Common myeloid progenitor, CD34-positive (primary cell): ENCODE measurements at regions of chr7 and their contacts with region 1.

Region 1: DNA sequence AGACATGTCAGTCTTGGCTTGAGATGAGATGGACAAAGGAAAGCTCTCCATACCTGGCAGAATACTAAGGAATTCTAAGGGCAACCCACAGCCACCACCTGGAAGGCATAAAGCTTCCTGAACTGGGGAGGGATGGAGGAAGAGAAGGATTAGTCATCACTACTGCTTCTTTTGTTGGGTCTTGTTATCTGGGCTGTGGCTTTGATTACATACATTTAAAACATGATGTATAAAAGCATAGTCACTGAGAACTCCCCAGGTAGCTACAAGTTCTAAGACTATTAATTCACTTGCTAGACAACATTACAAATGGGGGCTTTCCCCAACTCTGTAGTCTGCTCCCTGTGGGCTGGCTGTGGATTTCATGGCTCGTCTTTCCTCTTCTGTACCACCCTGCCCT is 58.2 kb downstream of the RBM33 start:
- DNase-seq: no peak
- H3K4me3 ChIP-seq: no peak overlapping the region
- H3K27ac ChIP-seq: no peak overlapping the region
- H3K4me1 ChIP-seq: no peaks in the 10 kb centered on the region
- H3K27me3 ChIP-seq: no peaks in the 10 kb centered on the region

Region 2: GRCh38 chr7:155692317-155692716 is 10.3 kb before region 1 on chr7:
- CTCF ChIA-PET with region 1: interaction called, 12 read pairs
- POLR2A ChIA-PET with region 1: no interaction called
- DNase-seq: no peak
- H3K4me3 ChIP-seq: no peak overlapping the region
- H3K27ac ChIP-seq: no peak overlapping the region
- H3K4me1 ChIP-seq: peaks cover 0 to 4% (median under 1%) of the 10 kb centered on the region in 4 experiments
- H3K27me3 ChIP-seq: no peaks in the 10 kb centered on the region

Region 3: GRCh38 chr7:155713384-155713783 is 10.8 kb after region 1 on chr7:
- CTCF ChIA-PET with region 1: interaction called, 10 read pairs
- POLR2A ChIA-PET with region 1: interaction called, 3 read pairs
- DNase-seq: peak in 1 of 3 donors; percentile 7
- H3K4me3 ChIP-seq: no peak overlapping the region
- H3K27ac ChIP-seq: no peak overlapping the region
- H3K4me1 ChIP-seq: peaks cover 0 to 7% (median 3%) of the 10 kb centered on the region in 4 experiments
- H3K27me3 ChIP-seq: no peaks in the 10 kb centered on the region